ENCODE measurements at regions of chr11 and their contacts with region 1.

Region 1: DNA sequence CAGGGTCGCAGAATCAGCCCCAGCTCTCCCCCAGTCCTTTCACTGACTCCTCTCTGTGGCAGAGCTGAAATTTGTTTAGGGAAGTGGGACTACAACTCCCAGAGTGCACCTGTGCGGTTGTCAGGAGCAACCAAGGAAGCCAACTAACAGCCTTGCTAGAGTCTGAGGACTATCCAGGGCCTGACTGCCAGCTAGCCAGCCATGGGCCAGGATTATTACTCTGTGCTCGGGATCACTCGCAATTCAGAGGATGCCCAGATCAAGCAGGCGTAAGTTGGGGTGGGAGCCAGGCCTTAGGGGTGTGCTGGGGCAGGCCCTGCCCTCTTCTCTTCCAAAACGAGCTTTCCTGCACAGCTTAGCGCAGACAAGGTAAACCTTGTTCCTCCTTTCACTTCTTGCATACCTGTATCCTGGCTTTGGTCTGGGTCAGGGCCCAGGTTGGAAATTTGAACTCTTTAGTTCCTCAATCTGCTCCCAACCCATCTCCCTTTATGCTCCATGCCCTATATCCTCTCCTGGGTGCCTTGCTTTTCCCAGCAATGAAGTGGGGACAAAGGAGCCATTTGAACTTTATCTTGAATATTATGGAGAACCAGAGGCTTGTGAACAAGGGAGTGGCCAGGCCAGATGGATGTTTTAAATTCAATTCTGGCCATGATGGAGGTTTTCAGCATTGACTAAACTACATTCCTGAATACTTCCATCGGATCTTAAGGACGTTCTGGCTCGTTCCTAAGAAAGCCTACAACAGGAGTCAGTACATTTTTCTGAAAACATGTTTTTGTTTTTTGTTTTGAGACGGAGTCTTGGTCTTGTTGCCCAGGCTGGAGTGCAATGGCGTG is at the start of gene DNAJB13:
- DNase-seq: peak; percentile 43
- H3K4me3 ChIP-seq: no peak within 1 kb of the TSS
- H3K27ac ChIP-seq: no peak within 1 kb of the TSS
- H3K4me1 ChIP-seq: peaks cover 4% of the 10 kb centered on the region
- H3K27me3 ChIP-seq: no peaks in the 10 kb centered on the region
- CTCF ChIP-seq: no peak
- total RNA-seq, gene DNAJB13: not detected

Region 2: DNA sequence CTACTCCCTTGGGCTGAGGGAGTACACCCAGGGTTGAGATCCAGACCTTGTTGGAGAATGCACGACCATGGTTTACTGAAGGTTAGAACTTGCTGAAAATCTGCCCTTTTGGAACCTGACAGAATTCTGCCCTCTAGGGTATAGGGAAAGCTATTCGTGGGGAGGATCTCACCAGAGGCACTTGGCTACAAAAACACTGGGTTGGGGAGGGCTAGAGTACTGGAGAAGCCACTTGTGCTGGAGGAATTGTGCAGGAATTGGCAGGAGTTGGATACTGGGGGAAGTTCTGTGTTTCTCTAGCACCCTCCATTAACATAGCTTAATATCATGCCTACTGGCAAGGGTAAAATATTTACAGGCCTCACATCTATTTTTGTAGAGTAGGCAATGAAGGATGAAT is 275.8 kb after region 1 on chr11:
- CTCF ChIA-PET with region 1: no interaction called
- dilution Hi-C with region 1: no loop called
- in situ Hi-C with region 1: loop called in 1 of 2 experiments (anchors 25 kb)
- intact Hi-C with region 1: no loop called
- DNase-seq: no peak
- H3K4me3 ChIP-seq: no peak overlapping the region
- H3K27ac ChIP-seq: no peak overlapping the region
- H3K4me1 ChIP-seq: no peaks in the 10 kb centered on the region
- H3K27me3 ChIP-seq: no peaks in the 10 kb centered on the region
- CTCF ChIP-seq: no peak